Activated naive CD4-positive, alpha-beta T cell treated with anti-CD3 and anti-CD28 coated beads, Interleukin-2, amount 10 ng/mL, durations not matched to agents 7 days and 5 days (primary cell): ENCODE measurements at regions of chr19 and their contacts with region 1.

Region 1: DNA sequence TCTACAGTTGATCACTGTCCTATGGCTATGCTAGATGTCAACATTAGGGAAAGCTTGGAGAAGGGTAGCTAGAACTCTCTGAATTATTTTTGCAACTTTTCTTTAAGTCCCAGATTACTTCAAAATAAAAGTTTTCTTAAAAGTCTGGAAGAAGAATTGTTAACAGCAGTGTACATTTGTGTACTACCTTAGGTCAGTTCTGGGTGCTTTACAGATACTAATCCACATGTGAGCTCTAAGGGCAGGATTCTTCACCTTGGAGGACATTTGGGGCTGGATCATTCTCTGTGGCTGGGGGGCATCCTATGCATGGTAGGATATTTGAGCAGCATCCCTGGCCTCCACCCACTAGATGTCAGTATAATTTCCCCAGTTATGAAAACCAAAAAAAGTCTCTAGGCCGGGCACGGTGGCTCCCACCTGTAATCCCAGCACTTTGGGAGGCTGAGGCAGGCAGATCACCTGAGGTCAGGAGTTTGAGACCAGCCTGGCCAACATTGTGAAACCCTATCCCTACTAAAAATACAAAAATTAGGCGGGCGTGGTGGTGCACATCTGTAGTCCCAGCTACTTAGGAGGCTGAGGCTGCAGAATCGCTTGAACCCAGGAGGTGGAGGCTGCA is 2.8 kb downstream of the BRME1 start:
- DNase-seq: peak; percentile 53
- H3K4me3 Mint-ChIP-seq: no peak overlapping the region
- H3K27ac Mint-ChIP-seq: peak overlapping the region; percentile 45
- H3K4me1 Mint-ChIP-seq: peaks cover 41% of the 10 kb centered on the region
- H3K27me3 Mint-ChIP-seq: no peaks in the 10 kb centered on the region

Region 2: GRCh38 chr19:13644645-13645044 is 258.5 kb before region 1 on chr19:
- CTCF ChIA-PET with region 1: no interaction called
- DNase-seq: no peak
- H3K4me3 Mint-ChIP-seq: no peak overlapping the region
- H3K27ac Mint-ChIP-seq: no peak overlapping the region
- H3K4me1 Mint-ChIP-seq: no peaks in the 10 kb centered on the region
- H3K27me3 Mint-ChIP-seq: peaks cover 4% of the 10 kb centered on the region

Region 3: DNA sequence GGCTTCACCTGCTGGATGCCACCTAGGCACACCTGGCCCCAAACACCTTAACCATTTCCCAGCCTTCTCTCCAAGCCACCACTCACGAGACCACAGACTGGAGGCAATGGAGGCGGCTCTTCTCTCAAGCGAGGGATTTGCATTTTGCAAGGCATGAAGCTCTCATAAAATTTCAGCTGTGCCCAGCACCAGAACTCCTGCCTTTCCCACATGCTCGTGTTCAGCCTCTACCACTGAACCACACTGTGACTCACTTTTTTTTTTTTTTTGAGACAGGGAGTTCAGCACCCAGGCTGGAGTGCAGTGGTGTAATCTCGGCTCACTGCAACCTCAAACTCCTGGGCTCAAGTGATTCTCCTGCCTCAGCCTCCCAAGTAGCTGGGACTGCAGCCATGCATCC is 15.6 kb before region 1 on chr19:
- CTCF ChIA-PET with region 1: interaction called, 10 read pairs
- DNase-seq: no peak
- H3K4me3 Mint-ChIP-seq: no peak overlapping the region
- H3K27ac Mint-ChIP-seq: no peak overlapping the region
- H3K4me1 Mint-ChIP-seq: peaks cover 14% of the 10 kb centered on the region
- H3K27me3 Mint-ChIP-seq: peaks cover 24% of the 10 kb centered on the region

Region 4: DNA sequence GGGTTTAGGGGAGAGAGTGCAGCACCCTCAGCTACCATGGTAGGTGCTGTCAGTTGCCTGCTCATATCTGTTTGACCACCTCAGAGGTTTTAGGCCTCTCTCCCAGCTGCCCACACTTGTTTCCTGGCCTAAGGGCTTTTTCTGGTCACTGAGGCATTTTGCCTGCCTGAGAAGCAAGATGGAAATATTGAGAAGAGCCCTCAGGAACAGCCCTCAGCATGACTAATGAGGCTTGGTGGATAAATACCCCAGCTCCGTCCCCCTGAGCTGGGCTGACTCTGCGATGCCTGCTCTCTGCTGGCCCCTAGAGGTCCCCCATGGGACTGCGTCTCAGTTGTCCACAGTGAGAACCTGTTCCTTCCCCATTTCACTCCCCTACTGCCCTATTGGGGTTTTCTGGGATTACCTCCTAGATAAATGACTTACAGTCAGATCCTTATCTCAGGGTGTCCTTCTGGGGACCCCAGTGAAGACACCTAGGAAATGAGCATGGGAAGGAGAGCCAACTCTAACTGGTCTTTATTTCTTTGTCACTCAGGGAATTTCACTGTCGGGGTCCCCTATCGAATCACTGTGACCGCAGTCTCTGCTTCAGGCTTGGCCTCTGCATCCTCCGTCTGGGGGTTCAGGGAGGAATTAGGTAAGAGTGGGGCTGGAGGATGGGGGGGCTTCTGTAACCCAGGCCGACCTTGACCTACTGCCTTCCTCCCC is 145.5 kb after region 1 on chr19:
- CTCF ChIA-PET with region 1: interaction called, 12 read pairs
- DNase-seq: peak; percentile 80
- H3K4me3 Mint-ChIP-seq: no peak overlapping the region
- H3K27ac Mint-ChIP-seq: peak overlapping the region; percentile 49
- H3K4me1 Mint-ChIP-seq: no peaks in the 10 kb centered on the region
- H3K27me3 Mint-ChIP-seq: no peaks in the 10 kb centered on the region